Calu3 (cell line): ENCODE measurements at regions of chr17 and their contacts with region 1.

Region 1: DNA sequence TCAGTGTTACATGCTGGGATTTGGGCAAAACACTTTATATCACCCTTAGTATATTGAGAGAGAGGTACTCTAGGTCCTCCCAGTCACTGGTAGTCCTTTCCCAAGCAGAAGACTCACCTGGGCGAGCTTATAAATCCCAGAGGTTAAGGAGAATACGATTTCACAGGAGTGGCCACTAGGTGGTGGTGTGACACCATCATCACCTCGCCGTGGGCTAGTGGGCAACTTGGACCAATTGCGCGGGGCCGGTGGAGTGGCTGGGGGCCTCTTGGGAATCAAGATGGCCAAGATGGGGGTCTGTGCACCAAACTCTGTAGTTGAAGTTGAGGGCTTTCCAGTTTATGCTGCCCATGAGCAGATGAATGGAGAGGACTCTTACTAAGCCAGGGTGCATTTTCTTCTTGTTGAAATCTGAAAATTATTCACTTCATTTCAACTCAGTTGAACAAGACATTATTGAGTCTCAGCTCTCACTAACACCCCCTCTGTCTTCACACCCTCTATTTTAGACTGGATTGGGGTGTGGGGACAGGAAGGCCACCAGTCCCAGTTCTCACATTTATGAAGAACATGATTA is 38.2 kb upstream of the PIRT start:
- DNase-seq: peak; percentile 46
- H3K4me3 Mint-ChIP-seq: no peak overlapping the region
- H3K27ac Mint-ChIP-seq: no peak overlapping the region
- H3K4me1 Mint-ChIP-seq: no peaks in the 10 kb centered on the region
- H3K27me3 Mint-ChIP-seq: peaks cover 16% of the 10 kb centered on the region
- CTCF ChIP-seq: peak; percentile 57

Region 2: GRCh38 chr17:11144358-11145233 is 268.5 kb after region 1 on chr17:
- CTCF ChIA-PET with region 1: interaction called, 8 read pairs
- intact Hi-C with region 1: loop called (anchors 2 kb)
- DNase-seq: peak; percentile 7
- H3K4me3 Mint-ChIP-seq: no peak overlapping the region
- H3K27ac Mint-ChIP-seq: no peak overlapping the region
- H3K4me1 Mint-ChIP-seq: no peaks in the 10 kb centered on the region
- H3K27me3 Mint-ChIP-seq: no peaks in the 10 kb centered on the region
- CTCF ChIP-seq: no peak

Region 3: DNA sequence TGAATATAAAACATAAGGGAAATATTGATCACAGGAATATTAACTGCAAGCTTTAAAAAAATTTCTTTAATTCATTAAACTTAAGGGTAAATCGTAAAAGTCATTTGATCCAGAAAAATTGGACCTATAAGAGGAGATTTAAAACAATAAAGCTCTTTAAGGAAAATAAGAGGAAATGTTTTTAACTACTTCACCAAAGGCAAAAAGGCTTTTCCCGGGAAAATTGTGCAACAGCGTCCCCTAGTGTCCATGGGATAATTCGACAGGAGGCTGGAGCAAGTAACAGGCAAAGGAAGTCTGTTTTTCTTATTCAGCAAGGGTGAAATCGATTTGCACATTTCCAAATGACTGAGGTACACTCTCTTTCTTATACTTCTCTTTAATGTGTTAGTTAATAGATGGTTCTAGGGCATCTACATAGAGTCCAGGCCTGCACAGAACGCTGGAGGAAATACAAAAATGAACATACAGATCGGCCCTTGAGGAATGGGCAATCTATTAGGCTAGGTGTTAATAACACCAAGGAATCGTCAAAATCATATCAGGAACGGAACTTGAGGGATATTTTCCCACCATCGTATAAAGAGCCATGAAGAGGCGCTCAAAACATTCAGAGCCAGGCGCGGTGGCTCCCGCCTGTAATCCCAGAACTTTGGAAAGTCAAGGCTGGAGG is 1059.8 kb after region 1 on chr17:
- CTCF ChIA-PET with region 1: no interaction called
- intact Hi-C with region 1: loop called (anchors 2 kb)
- DNase-seq: peak; percentile 46
- H3K4me3 Mint-ChIP-seq: no peak overlapping the region
- H3K27ac Mint-ChIP-seq: no peak overlapping the region
- H3K4me1 Mint-ChIP-seq: no peaks in the 10 kb centered on the region
- H3K27me3 Mint-ChIP-seq: peaks cover 12% of the 10 kb centered on the region
- CTCF ChIP-seq: no peak

Region 4: GRCh38 chr17:11986942-11987329 is 1110.9 kb after region 1 on chr17:
- CTCF ChIA-PET with region 1: interaction called, 3 read pairs
- intact Hi-C with region 1: loop called (anchors 5 kb)
- DNase-seq: peak; percentile 3
- H3K4me3 Mint-ChIP-seq: no peak overlapping the region
- H3K27ac Mint-ChIP-seq: no peak overlapping the region
- H3K4me1 Mint-ChIP-seq: no peaks in the 10 kb centered on the region
- H3K27me3 Mint-ChIP-seq: no peaks in the 10 kb centered on the region
- CTCF ChIP-seq: no peak